Right cardiac atrium (tissue), 5 donors: ENCODE measurements at regions of chr3 and their contacts with region 1.

Region 1: GRCh38 chr3:39718674-39719595 is 90.5 kb upstream of the MYRIP start:
- DNase-seq: no peak
- ATAC-seq: no peak
- H3K4me3 ChIP-seq: no peak overlapping the region
- H3K27ac ChIP-seq: no peak overlapping the region
- H3K4me1 ChIP-seq: no peaks in the 10 kb centered on the region
- H3K27me3 ChIP-seq: no peaks in the 10 kb centered on the region

Region 2: DNA sequence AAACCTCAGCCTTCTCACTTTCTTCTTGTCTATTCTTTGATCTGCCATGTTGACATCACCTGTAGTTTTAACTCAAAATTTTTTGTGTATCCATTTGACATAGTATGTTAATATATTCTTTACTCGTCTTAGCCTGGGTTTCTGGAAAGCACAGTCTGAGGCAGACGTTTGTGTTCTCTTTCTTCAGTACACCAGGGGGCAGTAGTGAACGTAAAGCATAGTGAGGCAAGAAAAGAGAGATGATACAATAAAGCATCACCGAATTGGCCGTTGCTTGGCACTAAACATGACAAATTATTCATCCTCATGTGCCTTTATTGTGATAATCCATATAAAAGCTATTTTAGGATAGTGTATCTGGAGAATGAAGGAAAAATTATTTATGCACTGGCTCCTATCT is 50.5 kb before region 1 on chr3:
- intact Hi-C with region 1: no loop called
- DNase-seq: no peak
- ATAC-seq: no peak
- H3K4me3 ChIP-seq: no peak overlapping the region
- H3K27ac ChIP-seq: no peak overlapping the region
- H3K4me1 ChIP-seq: no peaks in the 10 kb centered on the region
- H3K27me3 ChIP-seq: no peaks in the 10 kb centered on the region

Region 3: GRCh38 chr3:40309925-40310695 is 591.2 kb after region 1 on chr3:
- intact Hi-C with region 1: loop called in 1 of 4 experiments (anchors 5 kb)
- DNase-seq: peak in 2 of 3 donors; percentile 58 to 79
- ATAC-seq: peak; percentile 42 to 55
- H3K4me3 ChIP-seq: peak overlapping the region; percentile 72
- H3K27ac ChIP-seq: peak overlapping the region; percentile 97
- H3K4me1 ChIP-seq: peaks cover 10% of the 10 kb centered on the region
- H3K27me3 ChIP-seq: no peaks in the 10 kb centered on the region